ENCODE measurements at regions of chr12 and their contacts with region 1.

Region 1: DNA sequence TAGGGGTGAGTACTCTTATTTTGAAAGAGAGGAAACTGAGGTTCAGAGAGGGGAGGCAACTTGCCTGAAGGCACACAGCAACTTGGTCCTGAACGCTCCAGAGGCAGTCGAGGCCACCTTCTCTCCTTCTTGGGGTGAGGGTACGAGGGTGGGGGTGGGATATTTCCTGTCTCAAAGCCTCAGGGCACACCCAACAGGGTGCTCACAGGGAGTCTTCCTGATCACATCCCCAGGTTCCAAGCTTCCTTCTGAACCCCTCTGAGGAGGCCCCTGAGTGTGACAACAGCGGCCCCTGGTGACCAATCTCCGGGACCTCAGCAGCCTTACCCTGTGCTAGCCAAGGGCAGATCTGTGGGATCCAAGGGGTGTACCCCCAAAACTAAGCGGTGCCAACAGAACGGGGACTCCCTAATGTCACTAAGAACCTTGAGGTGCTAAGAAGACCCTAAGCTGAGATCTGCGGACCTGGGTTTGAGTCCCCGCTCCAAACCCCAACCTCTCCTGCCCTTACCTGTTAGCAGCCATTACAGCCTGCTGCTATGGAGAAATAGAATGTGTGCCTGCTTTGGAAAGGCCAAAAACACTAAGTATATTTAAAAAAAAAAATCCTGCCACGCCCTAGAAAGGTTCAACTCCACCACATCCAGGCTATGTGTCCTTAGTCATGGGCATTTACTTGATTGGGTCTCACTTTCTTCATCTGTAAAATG is 57.9 kb downstream of the TRPV4 start:
- DNase-seq: peak; percentile 57 to 68
- H3K4me3 ChIP-seq: no peak overlapping the region
- H3K27ac ChIP-seq: no peak overlapping the region
- H3K4me1 ChIP-seq: peaks cover 26% of the 10 kb centered on the region
- H3K27me3 ChIP-seq: no peaks in the 10 kb centered on the region
- CTCF ChIP-seq: peak; percentile 91

Region 2: GRCh38 chr12:109518820-109519665 is 256.3 kb before region 1 on chr12:
- CTCF ChIA-PET with region 1: no interaction called
- POLR2A ChIA-PET with region 1: no interaction called
- intact Hi-C with region 1: loop called (anchors 1 kb)
- DNase-seq: peak in 1 of 2 experiments; percentile 57
- H3K4me3 ChIP-seq: no peak overlapping the region
- H3K27ac ChIP-seq: no peak overlapping the region
- H3K4me1 ChIP-seq: no peaks in the 10 kb centered on the region
- H3K27me3 ChIP-seq: no peaks in the 10 kb centered on the region
- CTCF ChIP-seq: peak; percentile 93

Region 3: GRCh38 chr12:109734219-109735000 is 40.9 kb before region 1 on chr12:
- CTCF ChIA-PET with region 1: no interaction called
- POLR2A ChIA-PET with region 1: no interaction called
- intact Hi-C with region 1: no loop called
- DNase-seq: no peak
- H3K4me3 ChIP-seq: no peak overlapping the region
- H3K27ac ChIP-seq: no peak overlapping the region
- H3K4me1 ChIP-seq: no peaks in the 10 kb centered on the region
- H3K27me3 ChIP-seq: no peaks in the 10 kb centered on the region
- CTCF ChIP-seq: no peak

Region 4: GRCh38 chr12:110301065-110301806 is 525.9 kb after region 1 on chr12:
- CTCF ChIA-PET with region 1: no interaction called
- POLR2A ChIA-PET with region 1: no interaction called
- intact Hi-C with region 1: no loop called
- DNase-seq: no peak
- H3K4me3 ChIP-seq: no peak overlapping the region
- H3K27ac ChIP-seq: peak overlapping the region; percentile 16; the same call in 1 of the 2 replicates
- H3K4me1 ChIP-seq: no peaks in the 10 kb centered on the region
- H3K27me3 ChIP-seq: no peaks in the 10 kb centered on the region
- CTCF ChIP-seq: no peak